ENCODE measurements at regions of chr2 and their contacts with region 1.

Region 1: GRCh38 chr2:201440182-201440581 is 11.1 kb downstream of the TRAK2 start:
- DNase-seq: no peak
- H3K4me3 ChIP-seq: no peak overlapping the region
- CTCF ChIP-seq: no peak

Region 2: GRCh38 chr2:201451292-201452057 is 11.3 kb after region 1 on chr2 and contains the starts of genes STRADB and TRAK2:
- CTCF ChIA-PET with region 1: interaction called, 5 read pairs
- POLR2A ChIA-PET with region 1: interaction called, 10 read pairs
- DNase-seq: peak; percentile 58
- H3K4me3 ChIP-seq: peak within 1 kb of the TSS; percentile 97
- CTCF ChIP-seq: peak; percentile 58

Measured in AG04449 (cell line).